HepG2 (cell line): ENCODE measurements at regions of chr6 and their contacts with region 1.

Region 1: DNA sequence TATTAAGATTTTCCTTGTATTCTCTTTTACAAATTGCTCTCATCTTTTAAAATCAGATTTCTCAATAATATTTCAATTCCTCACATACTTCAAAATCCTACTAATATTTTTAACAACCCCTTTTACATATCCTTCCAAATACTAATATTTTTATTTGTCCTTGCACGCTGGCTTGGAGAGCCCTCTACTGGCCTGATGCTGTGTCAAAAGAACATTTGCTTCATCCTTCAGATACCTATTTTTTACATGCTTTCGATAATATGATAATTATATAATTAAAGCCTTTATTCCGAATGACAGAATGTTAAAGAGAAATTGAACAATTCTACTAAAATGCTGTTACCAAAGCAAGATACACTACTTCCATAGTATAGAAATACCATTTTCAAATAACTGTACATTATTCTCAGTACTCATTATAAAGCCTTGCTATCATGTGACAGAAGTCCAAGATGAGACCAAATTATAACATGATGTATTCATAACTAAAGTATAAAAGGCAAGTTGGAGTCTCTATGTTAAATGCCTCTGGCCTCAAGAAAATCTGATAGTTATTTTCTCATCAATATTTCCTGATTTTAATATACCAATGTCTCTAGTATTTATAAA is 39.0 kb upstream of the PLN start:
- DNase-seq: peak; percentile 26
- ATAC-seq: no peak
- H3K4me3 ChIP-seq: no peak overlapping the region
- H3K27ac ChIP-seq: no peak overlapping the region
- H3K4me1 ChIP-seq: no peaks in the 10 kb centered on the region
- H3K27me3 ChIP-seq: no peaks in the 10 kb centered on the region
- CTCF ChIP-seq: peak; percentile 66
- EP300 ChIP-seq: no peak
- POLR2A ChIP-seq: no peak
- RAD21 ChIP-seq: peak; percentile 66

Region 2: GRCh38 chr6:118408863-118409262 is 100.2 kb before region 1 on chr6:
- CTCF ChIA-PET with region 1: interaction called, 4 read pairs
- POLR2A ChIA-PET with region 1: no interaction called
- in situ Hi-C with region 1: no loop called
- intact Hi-C with region 1: loop called (anchors 1 kb)
- DNase-seq: no peak
- ATAC-seq: peak; percentile 89
- H3K4me3 ChIP-seq: no peak overlapping the region
- H3K27ac ChIP-seq: no peak overlapping the region
- H3K4me1 ChIP-seq: no peaks in the 10 kb centered on the region
- H3K27me3 ChIP-seq: no peaks in the 10 kb centered on the region
- CTCF ChIP-seq: peak; percentile 26; the same call in 1 of the 2 replicates
- EP300 ChIP-seq: no peak
- POLR2A ChIP-seq: no peak
- RAD21 ChIP-seq: no peak

Region 3: DNA sequence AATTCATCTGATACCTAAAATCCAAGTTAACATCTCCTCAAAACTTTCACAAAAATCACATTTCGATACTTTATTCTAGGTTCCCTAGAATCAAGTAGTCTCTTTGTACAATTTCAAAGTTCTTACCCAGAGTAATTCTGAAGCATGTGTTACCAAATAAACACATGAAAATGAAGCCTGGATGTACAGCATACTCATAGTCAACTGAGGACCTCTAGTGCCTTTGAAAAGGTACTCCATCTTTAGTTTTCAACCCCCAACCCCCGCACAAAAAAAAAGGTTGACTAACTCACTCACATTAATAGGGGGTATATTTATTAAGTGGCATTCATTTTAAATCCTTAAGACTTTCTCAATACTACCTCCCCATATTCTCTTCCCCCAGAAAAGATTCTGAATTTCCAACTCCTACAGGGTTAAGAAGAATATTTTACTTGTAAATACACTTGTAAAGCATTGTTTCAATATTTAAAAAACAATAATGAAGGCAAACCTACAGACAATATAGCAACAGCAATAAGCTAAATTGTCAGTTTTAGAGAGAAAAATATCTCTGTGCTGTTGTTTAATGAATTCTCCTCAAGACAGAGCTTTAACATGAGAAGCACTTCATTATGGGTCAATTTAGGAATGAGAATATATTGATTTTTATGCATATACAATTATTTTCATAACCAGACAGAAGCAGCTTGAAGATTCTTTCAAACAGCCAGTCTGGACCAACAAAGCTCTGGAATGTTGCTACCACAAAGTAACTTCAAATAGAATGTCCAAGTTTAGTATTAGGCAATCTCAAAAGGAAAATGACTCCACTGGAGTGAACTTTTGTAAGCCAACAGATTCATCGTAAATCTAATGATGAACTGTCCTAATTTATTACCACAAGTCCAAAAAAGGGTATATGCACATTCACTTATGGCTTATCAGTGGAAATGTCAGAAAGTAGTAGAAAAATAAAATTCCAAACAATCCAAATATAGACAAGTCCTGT is 42.2 kb after region 1 on chr6:
- CTCF ChIA-PET with region 1: no interaction called
- POLR2A ChIA-PET with region 1: no interaction called
- in situ Hi-C with region 1: no loop called
- intact Hi-C with region 1: loop called (anchors 1 kb)
- DNase-seq: peak; percentile 44
- ATAC-seq: peak; percentile 93
- H3K4me3 ChIP-seq: no peak overlapping the region
- H3K27ac ChIP-seq: no peak overlapping the region
- H3K4me1 ChIP-seq: no peaks in the 10 kb centered on the region
- H3K27me3 ChIP-seq: no peaks in the 10 kb centered on the region
- CTCF ChIP-seq: peak; percentile 60
- EP300 ChIP-seq: no peak
- POLR2A ChIP-seq: no peak
- RAD21 ChIP-seq: peak; percentile 48; the same call in 1 of the 2 replicates

Region 4: DNA sequence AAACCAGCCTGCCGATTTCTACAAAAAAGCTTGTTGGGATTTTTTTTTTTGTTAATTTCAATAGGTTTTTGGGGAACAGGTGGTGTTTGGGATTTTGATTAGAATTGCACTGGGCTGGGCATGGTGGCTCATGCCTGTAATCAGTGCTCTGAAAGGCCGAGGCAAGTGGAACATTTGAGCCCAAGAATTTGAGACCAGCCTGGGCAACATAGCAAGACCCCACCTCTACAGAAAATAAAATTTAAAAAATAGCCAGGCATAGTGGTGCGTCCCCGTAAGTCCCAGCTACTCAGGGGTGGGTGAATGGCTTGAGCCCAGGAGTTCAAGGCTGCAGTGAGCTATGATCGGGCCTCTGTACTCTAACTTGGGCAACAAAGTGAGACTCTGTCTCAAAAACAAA is 344.3 kb after region 1 on chr6:
- CTCF ChIA-PET with region 1: no interaction called
- POLR2A ChIA-PET with region 1: no interaction called
- in situ Hi-C with region 1: no loop called
- intact Hi-C with region 1: no loop called
- DNase-seq: no peak
- ATAC-seq: no peak
- H3K4me3 ChIP-seq: no peak overlapping the region
- H3K27ac ChIP-seq: no peak overlapping the region
- H3K4me1 ChIP-seq: no peaks in the 10 kb centered on the region
- H3K27me3 ChIP-seq: no peaks in the 10 kb centered on the region
- CTCF ChIP-seq: no peak
- EP300 ChIP-seq: no peak
- POLR2A ChIP-seq: no peak
- RAD21 ChIP-seq: no peak